Posterior vena cava (tissue), 2 donors: ENCODE measurements at regions of chr15 and their contacts with region 1.

Region 1: GRCh38 chr15:72706266-72706665 is 20.3 kb downstream of the BBS4 start:
- DNase-seq: no peak

Region 2: GRCh38 chr15:72671535-72671934 is 34.7 kb before region 1 on chr15:
- intact Hi-C with region 1: loop called in 1 of 2 experiments (anchors 2 kb)
- DNase-seq: no peak